Activated CD4-positive, alpha-beta T cell treated with anti-CD3 and anti-CD28 coated beads, Interleukin-2, amount 10 ng/mL, durations not matched to agents 24 days and 14 days (primary cell): ENCODE measurements at regions of chr1 and their contacts with region 1.

Region 1: DNA sequence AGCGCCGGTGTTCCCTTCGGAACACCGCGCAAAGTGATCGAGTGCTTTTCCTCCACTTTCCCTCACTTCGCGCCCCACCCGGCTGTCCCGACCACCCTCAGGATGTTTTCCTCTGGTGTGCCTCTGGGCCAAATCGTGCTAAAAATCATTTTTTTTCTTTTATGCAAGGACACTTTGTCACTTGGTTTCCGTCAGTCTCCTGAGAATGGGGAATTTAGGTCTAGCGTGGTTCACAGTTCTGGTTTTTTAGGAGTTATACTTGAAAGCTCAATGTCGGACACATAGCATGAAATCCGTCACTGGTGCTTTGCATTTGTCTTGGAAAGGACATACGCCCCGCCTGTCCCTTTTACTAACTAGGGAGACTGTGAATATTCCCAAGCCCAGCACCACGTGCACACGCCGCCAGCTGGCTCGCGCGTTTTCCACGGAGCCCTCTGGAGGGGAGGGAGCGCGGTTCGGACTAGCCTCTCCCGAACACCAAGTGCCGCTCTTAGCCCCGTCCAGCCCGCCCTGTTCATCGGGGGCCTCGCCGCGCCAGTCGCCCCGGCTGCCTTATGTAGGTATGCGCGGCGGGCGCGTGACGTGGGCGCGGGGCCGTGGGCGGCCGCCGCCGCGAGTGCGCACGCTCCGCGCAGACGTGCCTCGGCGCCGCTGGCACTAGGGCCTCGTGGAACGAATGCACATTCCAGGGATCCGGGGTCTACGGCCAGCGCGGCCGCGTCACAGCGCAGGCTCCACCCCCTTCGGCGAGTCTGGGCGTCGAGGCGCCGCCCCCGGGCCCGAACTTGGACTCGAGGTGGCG is 572 bp upstream of the IRF2BP2 start:
- DNase-seq: peak; percentile 98
- H3K4me3 Mint-ChIP-seq: peak overlapping the region; percentile 95
- H3K27ac Mint-ChIP-seq: peak overlapping the region; percentile 100
- H3K4me1 Mint-ChIP-seq: peaks cover 47% of the 10 kb centered on the region
- H3K27me3 Mint-ChIP-seq: peaks cover 2% of the 10 kb centered on the region

Region 2: GRCh38 chr1:234656856-234657654 is 46.5 kb after region 1 on chr1:
- intact Hi-C with region 1: loop called (anchors 2 kb)
- DNase-seq: no peak
- H3K4me3 Mint-ChIP-seq: no peak overlapping the region
- H3K27ac Mint-ChIP-seq: peak overlapping the region; percentile 55
- H3K4me1 Mint-ChIP-seq: peaks cover 18% of the 10 kb centered on the region
- H3K27me3 Mint-ChIP-seq: peaks cover 2% of the 10 kb centered on the region

Region 3: DNA sequence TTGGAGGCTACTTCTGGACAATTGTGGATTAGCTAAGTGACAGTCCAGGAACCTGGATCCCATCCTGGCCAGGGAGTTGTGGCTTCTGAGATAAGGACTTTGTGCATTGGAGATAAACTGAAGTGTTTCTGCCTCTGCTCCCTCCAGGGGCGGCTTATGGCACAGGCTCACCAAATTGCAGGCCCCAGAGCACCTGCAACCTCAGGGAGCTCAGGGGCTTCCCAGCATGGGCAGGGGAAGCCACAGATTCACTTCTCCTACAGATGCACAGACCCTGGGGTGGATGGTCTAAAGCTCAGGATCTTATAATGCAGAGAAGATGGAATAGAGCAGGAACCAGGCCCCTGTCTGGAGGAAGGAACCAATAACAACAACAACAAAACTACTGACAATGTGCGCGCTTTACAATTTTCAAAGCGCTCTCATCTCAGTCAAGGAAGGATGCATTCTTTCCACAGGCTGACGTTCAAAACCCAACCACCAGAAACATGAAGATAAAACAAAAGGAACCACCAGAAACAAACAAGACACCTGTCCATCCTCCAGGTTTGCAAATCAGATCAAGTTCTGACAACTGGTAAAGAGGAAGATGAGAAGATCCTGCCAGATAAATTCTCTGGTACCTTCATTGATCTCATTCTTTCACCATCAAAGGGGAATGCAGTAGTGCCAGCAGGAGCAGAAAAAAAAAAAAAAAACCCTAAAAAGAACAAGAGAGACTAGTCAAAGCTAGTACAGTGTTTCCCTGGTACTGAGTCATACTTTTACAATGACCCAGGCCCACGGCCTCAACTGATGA is 120.4 kb after region 1 on chr1:
- intact Hi-C with region 1: loop called (anchors 1 kb)
- DNase-seq: peak; percentile 86
- H3K4me3 Mint-ChIP-seq: peak overlapping the region; percentile 68
- H3K27ac Mint-ChIP-seq: peak overlapping the region; percentile 96
- H3K4me1 Mint-ChIP-seq: peaks cover 77% of the 10 kb centered on the region
- H3K27me3 Mint-ChIP-seq: no peaks in the 10 kb centered on the region

Region 4: DNA sequence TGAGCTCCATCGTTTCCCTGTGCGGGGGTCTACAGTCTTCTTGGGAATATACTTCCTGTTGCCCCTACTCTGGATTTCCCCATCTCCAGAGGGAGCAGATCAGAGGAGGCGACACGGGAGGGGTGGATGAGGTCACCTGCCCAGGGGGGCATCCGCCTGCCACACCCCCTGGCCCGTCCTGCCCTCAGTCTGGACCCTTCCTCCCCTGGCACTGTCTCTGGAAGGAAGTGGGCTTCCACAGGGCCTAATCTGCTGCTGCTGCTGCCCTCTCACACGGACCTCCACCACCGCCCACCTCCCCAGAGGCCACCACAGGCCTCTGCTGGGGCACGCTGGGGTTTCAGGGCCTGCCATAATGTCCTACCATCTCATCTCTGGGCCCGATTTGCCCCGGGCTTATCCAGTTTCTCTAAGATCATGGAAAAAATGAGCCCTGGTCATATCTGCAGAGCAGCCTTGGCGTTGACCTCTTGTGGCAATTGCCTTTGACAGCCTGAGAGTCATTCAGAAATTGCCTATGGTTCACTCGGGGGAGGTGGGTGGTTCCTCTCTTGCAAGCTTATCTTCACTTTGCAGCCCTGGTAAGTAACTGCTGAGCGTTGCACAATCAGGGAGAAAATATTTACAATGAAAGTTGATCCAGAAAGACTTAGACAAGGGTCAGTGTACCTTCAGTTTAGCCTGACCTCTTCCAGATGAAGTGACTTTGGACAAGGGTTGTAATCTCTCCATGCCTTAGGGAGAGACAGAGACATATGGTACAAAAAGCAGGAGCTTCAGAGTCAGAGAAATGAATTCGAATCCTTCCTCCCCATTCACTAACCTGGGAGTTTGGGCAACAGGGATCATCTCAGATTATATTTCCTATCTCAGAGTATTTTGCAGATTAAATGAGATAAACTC is 265.7 kb after region 1 on chr1:
- intact Hi-C with region 1: loop called (anchors 2 kb)
- DNase-seq: no peak
- H3K4me3 Mint-ChIP-seq: peak overlapping the region; percentile 3
- H3K27ac Mint-ChIP-seq: peak overlapping the region; percentile 92
- H3K4me1 Mint-ChIP-seq: peaks cover 51% of the 10 kb centered on the region
- H3K27me3 Mint-ChIP-seq: no peaks in the 10 kb centered on the region

Region 5: DNA sequence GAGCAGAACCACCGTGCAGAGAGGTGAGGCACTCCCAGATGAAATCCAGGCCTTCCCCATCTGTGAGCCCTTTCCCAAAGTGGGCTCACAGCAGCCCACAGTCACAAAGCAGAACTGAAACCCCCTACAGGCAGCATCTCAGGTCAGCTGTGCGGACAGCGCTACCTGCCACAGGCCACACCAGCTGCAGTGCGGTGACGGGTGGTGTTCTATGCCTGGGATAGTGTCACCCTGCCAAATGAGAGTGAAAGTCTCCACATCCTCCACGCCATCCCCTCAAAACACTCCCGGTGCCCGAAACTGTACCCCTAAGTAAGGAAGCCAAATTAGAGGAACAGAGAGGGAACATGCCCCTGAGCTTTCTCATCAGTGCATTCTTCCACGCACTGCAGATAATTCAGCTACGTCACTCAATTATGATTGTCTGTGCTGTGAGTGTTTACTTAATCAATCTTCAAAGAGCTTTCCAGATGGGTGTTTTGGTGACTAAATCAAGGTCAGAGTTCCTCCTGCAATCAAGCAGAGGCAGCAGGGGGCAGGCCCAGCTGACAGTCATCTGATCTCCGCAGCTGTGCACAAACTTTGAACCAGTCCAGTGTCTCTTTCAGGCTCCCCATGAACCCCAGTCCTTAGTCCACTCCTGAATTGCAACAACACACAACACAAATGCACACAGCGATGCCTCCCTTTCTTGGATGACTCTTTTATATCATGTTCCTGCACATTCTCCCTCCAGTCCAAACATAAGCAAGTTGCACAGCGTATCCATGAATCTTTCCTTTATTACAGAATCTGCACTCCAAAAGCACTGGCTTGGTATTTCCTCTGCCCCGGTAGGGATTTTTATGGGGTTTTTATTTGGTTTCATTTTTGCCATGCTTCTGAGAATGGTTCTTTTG is 368.1 kb after region 1 on chr1:
- intact Hi-C with region 1: loop called (anchors 2 kb)
- DNase-seq: peak; percentile 82
- H3K4me3 Mint-ChIP-seq: peak overlapping the region; percentile 79
- H3K27ac Mint-ChIP-seq: peak overlapping the region; percentile 98
- H3K4me1 Mint-ChIP-seq: peaks cover 80% of the 10 kb centered on the region
- H3K27me3 Mint-ChIP-seq: no peaks in the 10 kb centered on the region